Activated T-helper 1 cell treated with anti-CD3 and anti-CD28 coated beads, Interleukin-12 subunit alpha, Interleukin-12 subunit beta, Interleukin-2, Interleukin-4 antibody, amounts not matched to agents 30 ng/mL and 10 ng/mL and 1 ng/mL, durations not matched to agents 14 hours and 24 hours and 36 hours (primary cell): ENCODE measurements at regions of chr4 and their contacts with region 1.

Region 1: DNA sequence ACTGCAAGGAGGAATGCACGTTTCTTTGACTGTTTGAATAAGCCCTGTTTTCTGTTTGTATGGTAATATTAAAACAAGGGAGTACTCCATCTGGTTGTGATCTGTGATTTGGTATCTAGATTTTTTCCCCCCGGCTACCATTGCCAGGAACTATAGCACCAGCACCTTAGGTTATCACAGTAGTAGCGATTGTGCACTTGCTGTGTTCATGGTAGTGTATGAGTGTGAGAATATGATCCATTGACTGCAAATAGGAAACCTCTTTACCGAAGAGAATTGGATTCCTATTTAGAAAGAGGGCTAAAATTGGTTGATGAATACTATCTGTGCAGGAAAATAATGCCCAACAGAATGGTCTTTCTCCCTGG is 69.9 kb downstream of the LARP7 start:
- DNase-seq: no peak
- H3K4me3 Mint-ChIP-seq: peak overlapping the region; percentile 92
- H3K27ac Mint-ChIP-seq: no peak overlapping the region
- H3K4me1 Mint-ChIP-seq: peaks cover 23% of the 10 kb centered on the region
- H3K27me3 Mint-ChIP-seq: peaks cover 54% of the 10 kb centered on the region

Region 2: GRCh38 chr4:112515304-112516067 is 191.3 kb before region 1 on chr4:
- intact Hi-C with region 1: loop called (anchors 2 kb)
- DNase-seq: peak; percentile 49
- H3K4me3 Mint-ChIP-seq: peak overlapping the region; percentile 95
- H3K27ac Mint-ChIP-seq: peak overlapping the region; percentile 93
- H3K4me1 Mint-ChIP-seq: peaks cover 79% of the 10 kb centered on the region
- H3K27me3 Mint-ChIP-seq: peaks cover 82% of the 10 kb centered on the region

Region 3: DNA sequence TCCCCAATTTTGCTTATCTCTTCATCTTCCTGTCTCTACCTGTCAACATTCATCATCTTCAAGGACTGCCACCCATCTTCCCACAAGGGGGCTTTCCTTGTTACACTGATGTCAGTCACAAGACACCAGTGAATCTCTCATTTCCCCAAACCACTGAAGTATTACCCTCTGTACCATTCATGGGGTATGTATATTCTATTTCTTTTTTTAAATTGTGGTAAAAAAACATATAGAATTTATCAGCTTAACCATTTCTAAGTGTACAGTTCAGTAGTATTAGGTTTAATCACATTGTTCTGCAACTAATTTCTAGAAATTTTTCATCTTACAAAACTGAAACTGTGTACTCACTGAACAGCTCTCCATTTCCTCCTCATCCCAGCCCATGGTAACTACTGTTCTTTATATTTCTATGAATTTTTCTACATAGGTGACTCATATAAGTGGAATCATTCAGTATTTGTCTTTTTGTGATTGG is 28.7 kb after region 1 on chr4:
- intact Hi-C with region 1: loop called (anchors 2 kb)
- DNase-seq: no peak
- H3K4me3 Mint-ChIP-seq: no peak overlapping the region
- H3K27ac Mint-ChIP-seq: peak overlapping the region; percentile 34
- H3K4me1 Mint-ChIP-seq: peaks cover 23% of the 10 kb centered on the region
- H3K27me3 Mint-ChIP-seq: no peaks in the 10 kb centered on the region